Calu3 (cell line): ENCODE measurements at regions of chr2 and their contacts with region 1.

Region 1: DNA sequence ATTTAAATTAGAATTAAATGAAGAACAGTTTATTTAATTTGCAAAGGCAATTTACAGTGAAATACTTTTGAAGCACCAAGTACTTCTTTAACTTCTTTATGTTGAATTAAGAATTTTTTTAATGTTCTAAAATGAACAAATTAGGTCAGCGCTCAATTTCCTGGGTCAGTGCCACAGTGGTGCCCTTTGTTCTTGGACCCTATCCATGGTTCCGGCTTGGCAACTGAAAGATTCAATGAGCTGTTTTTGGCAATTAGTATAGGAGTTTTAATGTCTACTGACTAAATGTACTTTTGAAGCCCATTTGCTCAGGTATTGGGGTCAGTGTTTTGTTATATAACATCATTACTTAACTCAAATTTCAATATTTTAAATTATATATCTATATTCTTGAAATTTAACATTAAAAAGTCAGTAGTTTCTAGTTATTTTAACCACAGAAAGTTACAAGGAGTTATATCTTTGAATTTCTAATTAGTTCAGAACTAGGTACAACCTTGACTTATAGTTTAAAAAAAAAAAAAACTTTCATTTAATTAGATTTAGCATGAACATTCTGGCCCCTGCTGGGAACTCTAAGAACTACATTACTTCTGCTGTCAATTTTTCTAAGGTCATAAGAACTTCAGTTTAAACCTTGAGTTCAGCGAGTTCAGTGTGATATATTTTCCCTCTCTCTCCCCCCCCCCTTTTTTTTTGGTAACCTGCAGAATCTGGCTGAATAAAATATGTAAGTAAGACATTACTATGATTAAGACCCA is 7.6 kb upstream of the MSTN start:
- DNase-seq: peak; percentile 45
- H3K4me3 Mint-ChIP-seq: no peak overlapping the region
- H3K27ac Mint-ChIP-seq: no peak overlapping the region
- H3K4me1 Mint-ChIP-seq: no peaks in the 10 kb centered on the region
- H3K27me3 Mint-ChIP-seq: no peaks in the 10 kb centered on the region
- CTCF ChIP-seq: peak; percentile 45

Region 2: DNA sequence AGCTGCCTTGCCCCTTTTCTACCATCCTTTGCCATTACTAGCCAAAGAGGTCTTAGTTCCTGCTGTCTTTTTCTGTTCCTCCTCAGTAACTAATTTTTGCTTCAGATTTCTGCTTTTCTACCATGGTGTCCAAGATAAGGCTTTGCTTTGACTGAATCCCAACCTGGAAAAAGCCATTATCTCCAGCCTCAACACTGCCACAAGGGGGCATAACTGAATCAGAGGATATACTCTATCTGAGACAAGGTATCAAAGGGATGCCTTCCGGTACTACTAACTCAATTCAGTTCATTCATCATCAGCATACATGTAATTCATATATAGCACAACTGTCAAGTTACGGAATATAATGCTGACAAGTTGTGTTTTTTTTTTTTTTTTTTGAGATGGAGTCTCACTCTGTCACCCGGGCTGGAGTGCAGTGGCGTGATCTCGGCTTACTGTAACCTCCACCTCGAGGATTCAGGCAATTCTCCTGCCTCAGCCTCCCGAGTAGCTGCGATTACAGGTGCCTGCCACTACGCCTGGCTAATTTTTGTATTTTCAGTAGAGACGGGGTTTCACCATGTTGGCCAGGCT is 318.9 kb before region 1 on chr2:
- CTCF ChIA-PET with region 1: interaction called, 3 read pairs
- intact Hi-C with region 1: loop called (anchors 1 kb)
- DNase-seq: peak; percentile 56
- H3K4me3 Mint-ChIP-seq: no peak overlapping the region
- H3K27ac Mint-ChIP-seq: no peak overlapping the region
- H3K4me1 Mint-ChIP-seq: no peaks in the 10 kb centered on the region
- H3K27me3 Mint-ChIP-seq: no peaks in the 10 kb centered on the region
- CTCF ChIP-seq: peak; percentile 60

Region 3: GRCh38 chr2:189798312-189799029 is 271.6 kb before region 1 on chr2:
- CTCF ChIA-PET with region 1: interaction called, 6 read pairs
- intact Hi-C with region 1: loop called (anchors 1 kb)
- DNase-seq: no peak
- H3K4me3 Mint-ChIP-seq: no peak overlapping the region
- H3K27ac Mint-ChIP-seq: no peak overlapping the region
- H3K4me1 Mint-ChIP-seq: no peaks in the 10 kb centered on the region
- H3K27me3 Mint-ChIP-seq: no peaks in the 10 kb centered on the region
- CTCF ChIP-seq: peak; percentile 27

Region 4: GRCh38 chr2:190023861-190024260 is 46.3 kb before region 1 on chr2:
- CTCF ChIA-PET with region 1: no interaction called
- intact Hi-C with region 1: loop called (anchors 1 kb)
- DNase-seq: peak; percentile 27
- H3K4me3 Mint-ChIP-seq: no peak overlapping the region
- H3K27ac Mint-ChIP-seq: no peak overlapping the region
- H3K4me1 Mint-ChIP-seq: no peaks in the 10 kb centered on the region
- H3K27me3 Mint-ChIP-seq: no peaks in the 10 kb centered on the region
- CTCF ChIP-seq: peak; percentile 48